Calu3 (cell line): ENCODE measurements at regions of chr2 and their contacts with region 1.

Region 1: DNA sequence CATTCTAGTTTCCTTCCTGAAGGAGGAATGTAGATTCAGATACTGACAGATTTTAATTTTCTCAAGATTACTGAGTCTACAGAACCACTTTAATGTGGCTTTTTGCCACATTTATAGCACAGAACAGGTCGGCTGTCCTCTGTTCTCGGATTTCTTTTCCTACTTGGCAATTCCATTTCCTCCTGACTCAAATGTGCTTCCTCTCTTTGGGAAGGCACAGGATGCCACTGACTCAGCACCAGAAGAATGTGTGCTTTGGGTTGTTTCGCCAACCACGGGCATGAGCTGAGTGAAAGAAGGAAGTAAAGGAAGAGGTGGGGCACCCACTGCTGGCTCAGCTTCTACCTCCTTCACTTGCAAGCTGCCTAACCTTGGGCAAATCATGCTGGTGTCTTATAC is 970.6 kb upstream of the ACVR2A start:
- DNase-seq: peak; percentile 69
- H3K4me3 Mint-ChIP-seq: no peak overlapping the region
- H3K27ac Mint-ChIP-seq: no peak overlapping the region
- H3K4me1 Mint-ChIP-seq: peaks cover 6% of the 10 kb centered on the region
- H3K27me3 Mint-ChIP-seq: no peaks in the 10 kb centered on the region
- CTCF ChIP-seq: no peak

Region 2: GRCh38 chr2:145066151-145066661 is 1808.1 kb before region 1 on chr2:
- CTCF ChIA-PET with region 1: no interaction called
- intact Hi-C with region 1: loop called (anchors 10 kb)
- DNase-seq: no peak
- H3K4me3 Mint-ChIP-seq: no peak overlapping the region
- H3K27ac Mint-ChIP-seq: no peak overlapping the region
- H3K4me1 Mint-ChIP-seq: no peaks in the 10 kb centered on the region
- H3K27me3 Mint-ChIP-seq: no peaks in the 10 kb centered on the region
- CTCF ChIP-seq: no peak

Region 3: DNA sequence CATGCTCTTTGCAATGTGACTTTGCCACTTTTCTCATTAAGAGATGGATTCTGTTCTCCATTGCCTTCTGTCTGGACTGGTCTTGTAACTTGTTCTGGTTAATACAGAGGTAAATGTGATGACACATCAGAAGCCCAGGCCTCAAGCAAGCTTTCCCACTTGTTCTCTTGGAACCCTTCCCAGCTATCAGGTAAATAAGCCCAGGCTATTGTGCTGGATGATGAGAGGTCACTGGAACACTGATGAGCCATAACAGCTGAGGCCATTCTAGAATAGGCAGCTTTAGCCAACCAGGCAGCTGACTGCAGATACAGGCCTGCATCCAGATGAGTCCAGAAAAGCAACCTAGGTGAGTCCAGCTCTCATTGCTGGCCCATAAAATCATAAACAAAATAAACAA is 36.4 kb before region 1 on chr2:
- CTCF ChIA-PET with region 1: no interaction called
- intact Hi-C with region 1: loop called (anchors 1 kb)
- DNase-seq: no peak
- H3K4me3 Mint-ChIP-seq: no peak overlapping the region
- H3K27ac Mint-ChIP-seq: no peak overlapping the region
- H3K4me1 Mint-ChIP-seq: no peaks in the 10 kb centered on the region
- H3K27me3 Mint-ChIP-seq: no peaks in the 10 kb centered on the region
- CTCF ChIP-seq: no peak